Heart right ventricle (tissue), 16 donors: ENCODE measurements at regions of chr10 and their contacts with region 1.

Region 1: DNA sequence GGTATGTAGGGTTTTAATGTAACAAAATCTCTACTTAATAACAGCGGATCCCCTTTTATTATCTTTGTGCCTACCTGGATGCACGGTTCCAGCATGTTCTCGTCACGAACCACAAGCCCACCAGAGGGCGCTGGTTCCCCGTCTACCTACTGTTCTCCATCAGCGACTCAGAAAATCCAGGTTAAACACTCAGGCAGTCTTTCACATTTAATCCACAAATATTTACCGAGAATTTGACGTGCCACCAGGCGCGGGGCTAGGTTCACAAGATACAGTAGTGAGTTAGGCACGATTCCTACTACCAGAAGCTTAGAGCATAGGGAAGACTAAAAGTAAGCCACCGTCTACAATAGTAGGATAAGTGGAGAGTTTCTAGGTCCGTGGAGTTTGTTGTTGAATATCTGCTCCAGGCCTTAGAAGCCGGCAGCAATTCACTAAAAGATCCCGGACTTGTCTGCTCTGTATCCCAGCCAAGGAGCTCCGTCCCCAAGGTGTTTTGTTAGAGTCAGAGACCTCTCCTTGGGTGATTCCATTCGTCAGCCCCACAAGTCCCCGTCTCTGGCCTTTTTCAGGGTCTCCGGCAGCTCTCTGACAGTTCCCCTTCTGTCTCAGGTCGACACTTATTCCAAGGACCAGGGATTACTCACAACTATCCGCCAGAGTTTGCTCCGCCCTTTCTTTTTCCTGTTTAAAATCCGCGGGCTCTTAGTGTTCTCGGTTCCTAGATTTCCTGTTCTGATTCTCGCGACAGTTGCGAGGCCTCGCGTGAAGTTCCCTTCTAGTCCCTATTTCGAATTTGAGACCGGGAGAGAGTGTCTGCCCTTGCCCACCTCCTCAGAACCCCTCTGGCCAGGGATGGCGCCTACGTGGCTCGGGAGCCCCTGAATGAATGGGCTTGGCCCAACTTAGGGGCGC is 1.5 kb upstream of the KAZALD1 start:
- DNase-seq: peak; percentile 93 to 96
- ATAC-seq: peak; percentile 61 to 85 (median 76)
- H3K4me3 ChIP-seq: peak overlapping the region; percentile 52 to 90 (median 76)
- H3K27ac ChIP-seq: peak overlapping the region; percentile 92 to 99 (median 98)
- H3K4me1 ChIP-seq: peaks cover 6 to 52% (median 43%) of the 10 kb centered on the region in 9 donors
- H3K27me3 ChIP-seq: peaks cover 0 to 38% (median 0%) of the 10 kb centered on the region in 7 donors
- CTCF ChIP-seq: peak; percentile 67 to 95 (median 89)

Region 2: DNA sequence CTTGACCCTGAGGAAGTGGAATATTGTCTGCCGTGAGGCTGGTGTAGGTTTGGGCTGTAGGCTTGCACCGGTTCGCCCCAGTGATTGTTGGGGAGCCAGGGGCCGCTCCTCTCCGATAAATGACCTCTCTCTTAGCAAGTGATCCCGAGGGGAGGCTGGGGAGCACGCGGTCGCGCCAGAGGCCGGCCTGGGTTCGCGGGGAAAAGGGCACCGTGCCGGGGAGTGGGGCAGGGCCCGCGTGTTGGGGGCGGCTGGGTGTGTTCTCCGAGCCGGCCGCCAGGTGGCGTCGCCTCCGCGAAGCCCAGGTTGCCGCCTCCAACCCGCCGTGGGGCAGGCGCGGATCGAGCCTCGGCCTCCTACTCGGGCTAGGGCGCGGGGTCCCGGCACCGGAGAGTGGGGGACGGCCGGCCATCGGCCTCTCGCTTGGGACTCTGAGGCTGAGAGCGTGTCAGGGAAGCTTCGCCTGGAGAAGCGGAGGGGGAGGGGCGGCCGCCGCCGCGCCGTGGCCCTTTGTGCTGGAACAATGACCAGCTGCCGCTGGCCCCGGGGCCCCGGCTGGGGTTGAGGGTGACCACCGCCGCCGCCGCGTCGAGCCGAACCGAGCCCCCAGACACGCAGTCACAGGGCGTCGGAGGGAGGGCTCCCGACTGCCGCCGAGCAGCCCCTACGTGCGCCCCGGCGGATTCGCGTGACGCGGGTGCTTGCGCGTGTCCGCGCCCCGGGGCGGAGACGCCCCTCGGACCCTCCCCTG is 61.1 kb before region 1 on chr10:
- intact Hi-C with region 1: loop called in 2 of 10 experiments (anchors 5 to 10 kb)
- DNase-seq: peak; percentile 84 to 88
- ATAC-seq: peak; percentile 62 to 79 (median 72)
- H3K4me3 ChIP-seq: peak overlapping the region; percentile 61 to 93 (median 85)
- H3K27ac ChIP-seq: peak overlapping the region; percentile 98 to 100 (median 100)
- H3K4me1 ChIP-seq: peaks cover 16 to 67% (median 58%) of the 10 kb centered on the region in 9 donors
- H3K27me3 ChIP-seq: no peaks in the 10 kb centered on the region
- CTCF ChIP-seq: peak; percentile 94 to 99 (median 97)